ENCODE measurements at regions of chr5 and their contacts with region 1.

Region 1: GRCh38 chr5:131373265-131373664 is 109.4 kb downstream of the CDC42SE2 start:
- DNase-seq: peak; percentile 76 to 89 (median 82)
- ATAC-seq: peak; percentile 89
- H3K4me3 ChIP-seq: no peak overlapping the region
- H3K27ac ChIP-seq: peak overlapping the region; percentile 42; the same call in 2 of the 3 replicates
- H3K4me1 ChIP-seq: peaks cover 3 to 19% of the 10 kb centered on the region in 2 experiments; a peak in 4 of 5 replicates
- H3K27me3 ChIP-seq: no peaks in the 10 kb centered on the region
- CTCF ChIP-seq: no peak
- EP300 ChIP-seq: peak; percentile 51
- POLR2A ChIP-seq: no peak
- RAD21 ChIP-seq: peak in 1 of 2 experiments; percentile 25; a peak in 1 of 4 replicates

Region 2: GRCh38 chr5:131303537-131303936 is 69.7 kb before region 1 on chr5:
- CTCF ChIA-PET with region 1: no interaction called
- POLR2A ChIA-PET with region 1: no interaction called
- in situ Hi-C with region 1: no loop called
- intact Hi-C with region 1: loop called (anchors 5 kb)
- DNase-seq: no peak
- ATAC-seq: no peak
- H3K4me3 ChIP-seq: no peak overlapping the region
- H3K27ac ChIP-seq: no peak overlapping the region
- H3K4me1 ChIP-seq: peaks cover 0 to 10% of the 10 kb centered on the region in 2 experiments; a peak in 4 of 5 replicates
- H3K27me3 ChIP-seq: no peaks in the 10 kb centered on the region
- CTCF ChIP-seq: no peak
- EP300 ChIP-seq: no peak
- POLR2A ChIP-seq: no peak
- RAD21 ChIP-seq: no peak